Mammary epithelial cell (primary cell): ENCODE measurements at regions of chr1 and their contacts with region 1.

Region 1: GRCh38 chr1:26059906-26060305 is 7.5 kb downstream of the TRIM63 start:
- DNase-seq: no peak
- H3K4me3 ChIP-seq: no peak overlapping the region
- H3K27ac ChIP-seq: no peak overlapping the region
- H3K4me1 ChIP-seq: no peaks in the 10 kb centered on the region
- H3K27me3 ChIP-seq: no peaks in the 10 kb centered on the region
- CTCF ChIP-seq: no peak

Region 2: GRCh38 chr1:25906644-25907300 is 153.1 kb before region 1 on chr1:
- CTCF ChIA-PET with region 1: no interaction called
- dilution Hi-C with region 1: no loop called
- in situ Hi-C with region 1: no loop called
- intact Hi-C with region 1: no loop called
- DNase-seq: no peak
- H3K4me3 ChIP-seq: peak overlapping the region; percentile 72 to 94 (median 89)
- H3K27ac ChIP-seq: no peak overlapping the region
- H3K4me1 ChIP-seq: peaks cover 17% of the 10 kb centered on the region
- H3K27me3 ChIP-seq: no peaks in the 10 kb centered on the region
- CTCF ChIP-seq: no peak

Region 3: GRCh38 chr1:26021647-26022403 is 38.1 kb before region 1 on chr1 and contains the start of gene EXTL1:
- CTCF ChIA-PET with region 1: no interaction called
- dilution Hi-C with region 1: loop called (anchors 5 kb)
- in situ Hi-C with region 1: no loop called
- intact Hi-C with region 1: no loop called
- DNase-seq: no peak
- H3K4me3 ChIP-seq: no peak within 1 kb of the TSS
- H3K27ac ChIP-seq: no peak within 1 kb of the TSS
- H3K4me1 ChIP-seq: peaks cover 47% of the 10 kb centered on the region
- H3K27me3 ChIP-seq: no peaks in the 10 kb centered on the region
- CTCF ChIP-seq: no peak
- total RNA-seq, gene EXTL1: 0.16 to 6.8 TPM

Region 4: DNA sequence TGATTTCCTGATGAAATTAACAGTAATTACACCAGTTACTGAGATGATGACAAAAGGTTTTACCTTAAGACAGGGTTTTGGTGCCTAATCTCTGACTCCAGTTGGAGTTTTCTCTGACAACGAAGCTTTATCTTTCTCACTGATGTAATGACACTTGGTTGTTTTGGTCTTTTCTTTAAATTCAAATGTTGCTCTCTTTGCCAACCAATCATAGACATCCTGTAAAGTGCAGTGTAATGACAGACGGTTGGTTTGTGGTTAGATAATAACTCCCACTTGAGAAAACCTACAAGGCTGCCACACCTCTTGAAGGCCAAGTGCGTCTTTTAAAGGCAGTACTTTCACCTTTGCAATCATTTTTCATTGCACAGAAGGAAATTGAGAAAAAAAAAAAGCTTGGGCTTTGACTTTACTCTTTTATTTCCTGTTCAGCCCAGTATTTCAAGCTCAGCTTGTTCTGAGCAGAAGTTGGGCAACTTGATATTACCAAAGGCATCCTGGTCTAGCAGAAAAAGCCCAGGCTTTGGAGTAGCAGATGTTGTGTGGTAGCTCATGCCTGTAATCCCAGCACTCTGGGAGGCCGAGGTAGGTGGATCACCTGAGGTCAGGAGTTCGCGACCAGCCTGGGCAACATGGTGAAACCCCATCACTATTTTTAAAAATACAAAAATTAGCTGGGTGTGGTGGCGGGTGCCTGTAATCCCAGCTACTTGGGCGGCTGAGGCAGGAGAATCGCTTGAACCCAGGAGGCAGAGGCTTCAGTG is 66.6 kb after region 1 on chr1:
- CTCF ChIA-PET with region 1: no interaction called
- dilution Hi-C with region 1: loop called (anchors 5 kb)
- in situ Hi-C with region 1: no loop called
- intact Hi-C with region 1: no loop called
- DNase-seq: peak; percentile 74
- H3K4me3 ChIP-seq: no peak overlapping the region
- H3K27ac ChIP-seq: no peak overlapping the region
- H3K4me1 ChIP-seq: peaks cover 12% of the 10 kb centered on the region
- H3K27me3 ChIP-seq: no peaks in the 10 kb centered on the region
- CTCF ChIP-seq: no peak